Heart left ventricle (tissue), 16 donors: ENCODE measurements at regions of chr15 and their contacts with region 1.

Region 1: GRCh38 chr15:68550481-68551295 is 28.1 kb upstream of the CORO2B start:
- DNase-seq: peak; percentile 60 to 83 (median 72)
- ATAC-seq: peak in 3 of 4 donors; percentile 38 to 58 (median 43)
- H3K4me3 ChIP-seq: no peak overlapping the region
- H3K27ac ChIP-seq: no peak overlapping the region
- H3K4me1 ChIP-seq: peaks cover 0 to 8% (median 0%) of the 10 kb centered on the region in 12 donors
- H3K27me3 ChIP-seq: no peaks in the 10 kb centered on the region
- CTCF ChIP-seq: peak; percentile 89 to 97 (median 93)
- POLR2A ChIP-seq: no peak

Region 2: DNA sequence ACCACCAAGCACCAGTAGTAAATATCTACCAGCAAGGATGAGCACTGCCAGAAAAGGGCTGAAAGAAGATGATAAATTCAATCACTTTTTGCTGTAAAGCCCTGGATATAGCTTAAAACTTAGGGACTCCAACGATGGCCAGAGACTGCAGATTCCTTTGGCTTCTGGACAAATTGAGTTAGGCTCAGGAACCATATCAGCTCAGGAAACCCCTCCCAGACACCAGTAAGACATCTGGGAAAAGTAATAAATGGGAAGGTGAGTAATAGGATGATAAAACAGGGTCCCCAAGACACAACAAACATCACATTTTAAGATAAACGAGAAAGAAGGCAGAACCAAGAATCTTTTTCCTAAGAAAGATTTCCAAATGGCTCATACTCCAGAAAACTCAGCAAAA is 205.0 kb after region 1 on chr15:
- intact Hi-C with region 1: loop called in 1 of 10 experiments (anchors 5 kb)
- DNase-seq: no peak
- ATAC-seq: peak in 1 of 4 donors; percentile 50
- H3K4me3 ChIP-seq: no peak overlapping the region
- H3K27ac ChIP-seq: peak overlapping the region in 1 of 12 donors; percentile 53
- H3K4me1 ChIP-seq: peaks cover 0 to 13% (median 0%) of the 10 kb centered on the region in 12 donors
- H3K27me3 ChIP-seq: no peaks in the 10 kb centered on the region
- CTCF ChIP-seq: no peak
- POLR2A ChIP-seq: no peak

Region 3: DNA sequence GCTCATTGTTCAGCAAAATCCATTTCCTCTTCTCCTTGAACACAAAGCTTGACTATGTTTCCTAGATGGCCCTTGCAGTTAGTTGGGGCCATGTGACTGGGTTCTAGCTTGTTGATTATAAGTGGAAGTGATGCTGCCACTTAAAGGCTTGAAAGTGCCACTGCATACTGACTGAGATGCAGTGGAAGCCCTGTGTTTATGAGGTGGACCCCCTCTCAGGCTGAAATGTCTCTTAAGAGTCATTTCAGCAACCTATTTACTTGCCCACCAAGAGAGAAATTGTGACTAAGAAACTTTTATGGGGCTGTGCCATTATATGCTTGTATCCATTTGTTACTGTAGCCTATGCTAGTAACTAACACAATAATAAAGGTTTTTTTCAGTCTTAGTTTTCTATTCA is 278.4 kb after region 1 on chr15:
- intact Hi-C with region 1: loop called in 3 of 10 experiments (anchors 5 to 10 kb)
- DNase-seq: no peak
- ATAC-seq: peak in 3 of 4 donors; percentile 71 to 83 (median 81)
- H3K4me3 ChIP-seq: no peak overlapping the region
- H3K27ac ChIP-seq: no peak overlapping the region
- H3K4me1 ChIP-seq: peaks cover 0 to 12% (median 0%) of the 10 kb centered on the region in 12 donors
- H3K27me3 ChIP-seq: no peaks in the 10 kb centered on the region
- CTCF ChIP-seq: peak; percentile 39 to 68 (median 56)
- POLR2A ChIP-seq: no peak

Region 4: GRCh38 chr15:68924866-68925560 is 374.3 kb after region 1 on chr15:
- intact Hi-C with region 1: loop called (anchors 2 to 10 kb)
- DNase-seq: peak; percentile 58 to 81 (median 71)
- ATAC-seq: peak in 3 of 4 donors; percentile 86 to 91 (median 88)
- H3K4me3 ChIP-seq: no peak overlapping the region
- H3K27ac ChIP-seq: no peak overlapping the region
- H3K4me1 ChIP-seq: peaks cover 0 to under 1% (median 0%) of the 10 kb centered on the region in 12 donors
- H3K27me3 ChIP-seq: peaks cover 0 to 5% (median 0%) of the 10 kb centered on the region in 9 donors
- CTCF ChIP-seq: peak; percentile 62 to 92 (median 76)
- POLR2A ChIP-seq: no peak